CD4-positive, alpha-beta memory T cell (primary cell): ENCODE measurements at regions of chr11 and their contacts with region 1.

Region 1: DNA sequence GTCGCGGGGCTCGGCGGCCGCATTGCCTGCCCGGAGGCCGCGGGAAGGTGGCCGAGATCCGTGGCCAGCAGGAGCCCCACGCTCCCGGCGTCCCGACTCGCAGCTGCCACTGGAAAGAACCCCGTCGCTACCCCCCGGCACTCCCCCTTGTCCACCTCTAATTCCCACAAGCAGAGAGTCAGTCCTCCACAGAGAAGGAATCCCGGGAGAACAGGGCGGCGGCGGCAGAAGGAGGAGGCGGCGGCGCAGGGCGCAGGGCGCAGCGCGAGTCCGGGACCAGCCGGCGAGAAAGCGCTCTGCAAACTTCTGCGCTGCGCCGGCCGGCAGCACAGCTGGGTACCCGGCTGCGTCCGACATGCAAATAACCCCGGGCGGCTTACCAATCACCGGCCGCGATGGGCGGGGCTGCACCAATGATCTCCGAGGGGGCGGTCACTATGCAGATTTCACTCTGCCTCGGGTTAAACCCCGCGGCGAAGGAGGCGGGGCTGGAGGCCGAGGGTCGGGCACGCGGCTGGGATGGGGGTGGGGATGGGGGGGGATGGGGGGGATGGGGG is at the start of gene ABTB2:
- DNase-seq: peak; percentile 95 to 98 (median 96)
- H3K4me3 ChIP-seq: peak within 1 kb of the TSS; percentile 14 to 79
- H3K4me3 Mint-ChIP-seq: peak within 1 kb of the TSS; percentile 86 to 96 (median 92)
- H3K27ac ChIP-seq: peak within 1 kb of the TSS; percentile 34
- H3K27ac Mint-ChIP-seq: peak within 1 kb of the TSS; percentile 58 to 94 (median 92)
- H3K4me1 ChIP-seq: peaks cover 26% of the 10 kb centered on the region
- H3K4me1 Mint-ChIP-seq: peaks cover 10 to 23% (median 19%) of the 10 kb centered on the region in 4 donors
- H3K27me3 ChIP-seq: peaks cover 28% of the 10 kb centered on the region
- H3K27me3 Mint-ChIP-seq: peaks cover 35 to 38% of the 10 kb centered on the region in 2 donors
- total RNA-seq, gene ABTB2: 0.35 to 0.39 TPM

Region 2: GRCh38 chr11:32583459-32584271 is 1774.1 kb before region 1 on chr11 and contains the start of gene EIF3M:
- CTCF ChIA-PET with region 1: no interaction called
- POLR2A ChIA-PET with region 1: no interaction called
- intact Hi-C with region 1: loop called (anchors 5 kb)
- DNase-seq: peak; percentile 94 to 95 (median 94)
- H3K4me3 ChIP-seq: peak within 1 kb of the TSS; percentile 73 to 89
- H3K4me3 Mint-ChIP-seq: peak within 1 kb of the TSS; percentile 94 to 99 (median 97)
- H3K27ac ChIP-seq: peak within 1 kb of the TSS; percentile 93
- H3K27ac Mint-ChIP-seq: peak within 1 kb of the TSS; percentile 95 to 99 (median 98)
- H3K4me1 ChIP-seq: peaks cover 41% of the 10 kb centered on the region
- H3K4me1 Mint-ChIP-seq: peaks cover 31 to 51% (median 39%) of the 10 kb centered on the region in 4 donors
- H3K27me3 ChIP-seq: no peaks in the 10 kb centered on the region
- H3K27me3 Mint-ChIP-seq: no peaks in the 10 kb centered on the region
- total RNA-seq, gene EIF3M: 214 to 223 TPM

Region 3: DNA sequence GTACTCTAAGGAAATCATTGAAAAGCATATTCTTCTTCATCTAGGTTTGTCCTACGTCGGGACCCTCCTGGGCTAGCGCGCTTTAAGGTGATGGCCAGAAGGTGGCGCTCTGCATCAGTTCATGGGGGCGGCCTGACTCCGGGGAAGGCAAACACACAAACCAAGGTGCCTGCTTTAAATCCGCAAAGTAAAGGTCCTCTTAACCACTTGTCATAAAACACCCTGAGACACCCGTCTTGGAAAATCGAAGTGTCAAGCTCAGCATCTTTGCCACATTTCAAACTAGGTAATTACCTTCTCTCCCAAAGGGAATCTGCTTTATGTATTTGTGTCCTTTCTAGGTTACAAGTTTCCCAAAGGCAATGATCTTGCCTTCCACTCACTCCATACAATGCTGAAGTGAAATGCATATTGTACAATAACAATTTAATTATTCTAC is 499.8 kb before region 1 on chr11:
- CTCF ChIA-PET with region 1: interaction called, 7 read pairs
- POLR2A ChIA-PET with region 1: no interaction called
- intact Hi-C with region 1: loop called (anchors 1 kb)
- DNase-seq: peak; percentile 47 to 65 (median 54)
- H3K4me3 ChIP-seq: no peak overlapping the region
- H3K4me3 Mint-ChIP-seq: no peak overlapping the region
- H3K27ac ChIP-seq: no peak overlapping the region
- H3K27ac Mint-ChIP-seq: no peak overlapping the region
- H3K4me1 ChIP-seq: no peaks in the 10 kb centered on the region
- H3K4me1 Mint-ChIP-seq: no peaks in the 10 kb centered on the region
- H3K27me3 ChIP-seq: peaks cover 8% of the 10 kb centered on the region
- H3K27me3 Mint-ChIP-seq: peaks cover 33% of the 10 kb centered on the region in 2 donors

Region 4: DNA sequence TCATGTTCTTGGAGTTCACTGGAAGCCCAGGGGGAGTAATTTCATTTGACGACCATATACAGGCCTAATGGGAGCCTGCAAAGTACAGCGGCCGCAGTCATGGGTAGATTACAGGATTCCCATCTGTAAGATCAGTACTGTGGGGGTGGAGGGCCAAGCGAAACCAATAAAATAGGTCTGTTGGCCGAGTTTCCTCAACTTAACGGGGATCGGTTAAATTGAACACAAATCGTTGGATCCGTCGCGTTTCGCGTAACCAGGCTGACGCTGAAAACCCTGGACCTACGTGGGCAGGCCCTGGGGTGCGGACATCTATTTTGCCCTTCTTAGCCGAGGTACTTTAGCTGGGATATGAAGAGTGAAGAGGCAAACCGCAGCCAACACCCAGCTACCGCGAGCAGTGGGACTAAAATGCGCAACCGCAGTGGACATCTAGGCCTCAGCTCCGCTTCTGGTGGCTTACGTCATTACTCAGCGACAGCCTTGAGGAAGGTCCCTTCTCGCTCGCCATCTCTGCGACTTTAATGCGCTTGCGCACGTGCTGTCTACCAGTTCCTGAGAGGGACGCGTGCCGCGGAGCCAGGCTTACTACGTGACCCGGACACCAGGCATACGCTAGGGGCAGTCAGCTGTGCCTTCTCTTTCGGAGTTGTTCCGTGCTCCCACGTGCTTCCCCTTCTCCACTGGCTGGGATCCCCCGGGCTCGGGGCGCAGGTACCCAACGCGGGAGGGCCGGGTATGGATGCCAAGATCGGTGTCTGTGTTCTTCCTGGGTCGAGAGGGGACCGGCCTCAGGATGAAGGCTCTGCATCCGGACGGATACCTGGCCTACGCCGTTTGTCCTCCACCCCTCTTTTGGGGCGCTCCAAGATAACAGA is 252.5 kb before region 1 on chr11 and contains the start of gene NAT10:
- CTCF ChIA-PET with region 1: no interaction called
- POLR2A ChIA-PET with region 1: interaction called, 17 read pairs
- intact Hi-C with region 1: loop called (anchors 1 kb)
- DNase-seq: peak; percentile 96 to 98 (median 97)
- H3K4me3 ChIP-seq: peak within 1 kb of the TSS; percentile 83 to 86
- H3K4me3 Mint-ChIP-seq: peak within 1 kb of the TSS; percentile 95 to 98 (median 97)
- H3K27ac ChIP-seq: peak within 1 kb of the TSS; percentile 90
- H3K27ac Mint-ChIP-seq: peak within 1 kb of the TSS; percentile 99 to 100 (median 99)
- H3K4me1 ChIP-seq: peaks cover 31% of the 10 kb centered on the region
- H3K4me1 Mint-ChIP-seq: peaks cover 41 to 67% (median 51%) of the 10 kb centered on the region in 4 donors
- H3K27me3 ChIP-seq: no peaks in the 10 kb centered on the region
- H3K27me3 Mint-ChIP-seq: peaks cover 0 to 2% of the 10 kb centered on the region in 2 donors
- total RNA-seq, gene NAT10: 73.6 to 81.5 TPM

Region 5: DNA sequence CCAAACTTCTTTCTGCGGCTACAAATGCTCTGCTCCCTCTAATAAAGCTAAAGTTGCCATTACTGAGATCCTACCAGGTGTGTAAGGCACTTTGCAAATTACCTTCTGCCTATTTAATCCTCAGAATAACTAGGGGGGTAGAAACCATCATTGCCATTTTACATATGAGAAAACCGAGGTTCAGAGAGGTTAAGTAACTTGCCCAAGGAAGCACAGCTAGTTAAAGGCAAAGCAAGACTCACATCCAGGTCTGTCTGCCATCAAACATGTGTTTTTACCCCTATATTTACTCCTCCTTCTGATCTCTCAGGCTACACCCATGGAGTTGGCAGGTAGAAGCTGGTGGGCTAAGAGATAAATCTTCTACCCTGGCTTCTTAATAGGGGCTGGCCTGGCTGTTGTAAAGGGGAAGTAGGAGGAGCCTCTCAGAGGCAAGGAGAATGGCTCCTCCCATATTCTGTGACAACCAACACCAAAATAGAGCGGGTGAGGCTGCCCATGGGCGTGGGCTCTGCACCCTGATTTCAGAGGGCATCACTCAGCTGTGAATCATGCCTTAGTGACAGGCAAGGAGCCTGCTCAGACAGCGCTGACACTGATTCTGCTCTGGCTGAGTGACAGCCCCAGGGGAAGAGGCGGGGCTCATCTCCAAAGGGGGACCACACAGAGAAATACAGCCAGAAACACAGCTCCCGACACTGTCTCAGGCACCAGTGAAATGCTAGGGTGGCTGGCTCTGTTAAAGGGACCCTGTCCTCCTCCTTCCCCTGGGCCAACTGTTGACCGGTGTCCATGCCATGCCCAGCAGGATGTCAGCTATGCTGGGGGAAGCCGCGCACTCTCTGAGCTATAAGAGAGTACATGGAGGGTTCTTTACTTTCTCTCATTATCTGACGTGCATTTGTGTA is 106.8 kb before region 1 on chr11:
- CTCF ChIA-PET with region 1: interaction called, 6 read pairs
- POLR2A ChIA-PET with region 1: interaction called, 12 read pairs
- intact Hi-C with region 1: loop called (anchors 2 kb)
- DNase-seq: peak; percentile 45 to 87 (median 72)
- H3K4me3 ChIP-seq: peak overlapping the region in 1 of 2 donors; percentile 7
- H3K4me3 Mint-ChIP-seq: peak overlapping the region in 7 of 8 donors; percentile 26 to 81 (median 57)
- H3K27ac ChIP-seq: no peak overlapping the region
- H3K27ac Mint-ChIP-seq: peak overlapping the region in 4 of 7 donors; percentile 23 to 87 (median 53)
- H3K4me1 ChIP-seq: peaks cover 49% of the 10 kb centered on the region
- H3K4me1 Mint-ChIP-seq: peaks cover 38 to 61% (median 48%) of the 10 kb centered on the region in 4 donors
- H3K27me3 ChIP-seq: no peaks in the 10 kb centered on the region
- H3K27me3 Mint-ChIP-seq: peaks cover 0 to 3% of the 10 kb centered on the region in 2 donors

Region 6: DNA sequence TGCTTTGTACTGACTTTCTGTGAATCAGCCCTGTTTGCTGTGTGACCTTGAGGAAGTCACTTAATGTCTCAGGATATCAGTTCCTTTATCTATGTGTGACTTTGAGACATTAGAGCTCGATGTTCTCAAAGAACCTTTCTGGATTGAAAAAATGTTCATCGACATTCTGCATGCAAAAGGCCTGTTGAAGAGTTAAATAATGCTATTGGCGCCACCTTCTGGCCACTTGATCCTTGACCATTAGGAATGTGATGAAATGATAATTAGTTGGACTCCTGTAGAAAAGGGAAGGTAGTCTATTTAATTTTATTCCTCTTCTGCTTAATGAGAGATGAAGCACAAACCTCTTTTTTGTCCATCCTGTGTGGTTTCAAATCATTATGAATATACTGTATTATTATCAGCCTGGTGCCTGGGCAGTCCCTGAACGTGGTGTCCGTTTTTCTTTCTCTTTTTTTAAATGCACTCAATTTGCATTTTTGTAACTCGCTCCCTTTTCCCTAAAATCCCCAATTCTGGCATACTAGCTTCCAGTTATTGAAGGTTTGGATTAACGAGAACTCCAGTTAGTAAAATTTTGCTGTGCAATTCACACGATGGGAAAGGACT is 135.1 kb after region 1 on chr11:
- CTCF ChIA-PET with region 1: interaction called, 3 read pairs
- POLR2A ChIA-PET with region 1: no interaction called
- intact Hi-C with region 1: loop called (anchors 2 kb)
- DNase-seq: peak in 4 of 5 donors; percentile 8 to 15 (median 12)
- H3K4me3 ChIP-seq: no peak overlapping the region
- H3K4me3 Mint-ChIP-seq: no peak overlapping the region
- H3K27ac ChIP-seq: no peak overlapping the region
- H3K27ac Mint-ChIP-seq: no peak overlapping the region
- H3K4me1 ChIP-seq: no peaks in the 10 kb centered on the region
- H3K4me1 Mint-ChIP-seq: no peaks in the 10 kb centered on the region
- H3K27me3 ChIP-seq: no peaks in the 10 kb centered on the region
- H3K27me3 Mint-ChIP-seq: peaks cover 4 to 6% of the 10 kb centered on the region in 2 donors